Activated CD8-positive, alpha-beta T cell treated with anti-CD3 and anti-CD28 coated beads for 36 hours (primary cell): ENCODE measurements at regions of chr13 and their contacts with region 1.

Region 1: GRCh38 chr13:41668130-41668757 is 210.9 kb downstream of the RGCC start:
- DNase-seq: peak; percentile 45
- ATAC-seq: peak; percentile 90
- H3K4me3 Mint-ChIP-seq: no peak overlapping the region
- H3K27ac Mint-ChIP-seq: no peak overlapping the region
- H3K4me1 Mint-ChIP-seq: no peaks in the 10 kb centered on the region
- H3K27me3 Mint-ChIP-seq: no peaks in the 10 kb centered on the region
- CTCF ChIP-seq: peak; percentile 73

Region 2: DNA sequence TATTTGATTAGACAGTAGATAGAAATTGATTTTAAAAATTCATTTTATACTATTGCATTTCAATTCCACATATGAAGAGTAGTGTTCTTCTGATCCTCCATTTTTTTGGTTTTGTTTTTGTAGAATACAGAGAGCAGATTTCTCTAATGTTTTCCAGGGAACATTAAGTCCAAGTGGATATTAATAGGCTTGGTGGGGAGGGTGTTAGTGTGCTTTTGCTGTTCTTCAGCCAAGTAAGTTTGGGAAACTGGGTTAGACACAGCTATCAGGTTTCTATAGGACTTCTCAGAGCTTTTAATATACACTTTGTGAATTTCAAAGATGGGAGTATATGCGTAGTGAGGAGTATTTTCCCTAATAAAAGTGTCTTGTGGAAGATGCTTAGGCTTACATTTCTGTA is 335.4 kb before region 1 on chr13:
- CTCF ChIA-PET with region 1: no interaction called
- POLR2A ChIA-PET with region 1: no interaction called
- intact Hi-C with region 1: no loop called
- DNase-seq: no peak
- ATAC-seq: no peak
- H3K4me3 Mint-ChIP-seq: no peak overlapping the region
- H3K27ac Mint-ChIP-seq: peak overlapping the region; percentile 13
- H3K4me1 Mint-ChIP-seq: peaks cover 55% of the 10 kb centered on the region
- H3K27me3 Mint-ChIP-seq: no peaks in the 10 kb centered on the region
- CTCF ChIP-seq: no peak

Region 3: DNA sequence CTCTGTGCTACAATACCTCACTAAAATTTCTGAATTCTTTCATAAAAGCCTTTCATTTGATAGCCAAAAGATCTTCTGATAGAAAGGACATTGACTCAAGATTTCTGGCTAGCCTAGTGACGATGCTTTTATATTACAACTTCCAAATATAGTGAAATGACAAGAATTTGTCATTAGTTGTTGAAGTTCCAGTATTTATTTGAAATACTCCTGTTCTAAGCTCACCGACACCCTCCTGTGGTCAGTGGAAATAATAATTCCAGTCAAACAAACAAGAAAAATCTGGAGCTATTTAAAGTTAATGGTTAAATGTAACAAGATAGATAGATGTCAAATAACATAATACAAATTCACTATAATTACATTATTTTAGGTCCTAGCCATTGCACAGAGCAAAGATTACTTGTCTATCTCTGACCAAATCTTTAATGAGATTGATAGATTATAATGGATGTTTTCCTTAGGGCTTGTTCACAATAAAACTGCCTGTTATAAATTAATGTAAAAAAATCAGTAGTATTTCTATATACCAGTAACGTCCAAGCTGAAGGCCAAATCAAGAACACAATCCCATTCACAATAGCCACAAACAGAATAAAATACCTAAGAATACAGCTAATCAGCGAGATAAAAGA is 15.4 kb before region 1 on chr13:
- CTCF ChIA-PET with region 1: interaction called, 21 read pairs
- POLR2A ChIA-PET with region 1: no interaction called
- intact Hi-C with region 1: no loop called
- DNase-seq: peak; percentile 55
- ATAC-seq: no peak
- H3K4me3 Mint-ChIP-seq: no peak overlapping the region
- H3K27ac Mint-ChIP-seq: no peak overlapping the region
- H3K4me1 Mint-ChIP-seq: peaks cover 15% of the 10 kb centered on the region
- H3K27me3 Mint-ChIP-seq: no peaks in the 10 kb centered on the region
- CTCF ChIP-seq: peak; percentile 60

Region 4: GRCh38 chr13:41658056-41658661 is 10.1 kb before region 1 on chr13:
- CTCF ChIA-PET with region 1: interaction called, 21 read pairs
- POLR2A ChIA-PET with region 1: no interaction called
- intact Hi-C with region 1: no loop called
- DNase-seq: no peak
- ATAC-seq: no peak
- H3K4me3 Mint-ChIP-seq: no peak overlapping the region
- H3K27ac Mint-ChIP-seq: no peak overlapping the region
- H3K4me1 Mint-ChIP-seq: peaks cover 15% of the 10 kb centered on the region
- H3K27me3 Mint-ChIP-seq: no peaks in the 10 kb centered on the region
- CTCF ChIP-seq: no peak

Region 5: DNA sequence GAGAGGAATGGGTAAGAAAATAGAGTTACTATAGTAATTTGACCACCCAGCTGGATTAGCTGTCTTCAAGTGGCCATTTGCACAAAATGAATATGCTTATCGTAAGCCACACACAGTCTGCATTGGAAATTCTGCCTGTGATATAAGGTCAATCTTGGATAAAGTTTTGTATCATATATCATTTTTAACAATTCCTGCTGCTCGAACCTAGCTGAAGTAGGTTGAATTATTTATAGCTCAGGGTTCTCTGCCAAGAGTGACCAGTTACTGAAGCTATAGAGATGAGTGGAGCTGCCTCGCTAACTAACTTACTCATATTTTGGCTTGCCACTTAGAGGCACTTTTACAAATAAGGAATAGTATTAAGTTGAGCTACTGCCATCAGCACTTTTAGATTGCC is 10.0 kb after region 1 on chr13:
- CTCF ChIA-PET with region 1: interaction called, 22 read pairs
- POLR2A ChIA-PET with region 1: no interaction called
- intact Hi-C with region 1: no loop called
- DNase-seq: no peak
- ATAC-seq: no peak
- H3K4me3 Mint-ChIP-seq: no peak overlapping the region
- H3K27ac Mint-ChIP-seq: no peak overlapping the region
- H3K4me1 Mint-ChIP-seq: peaks cover 14% of the 10 kb centered on the region
- H3K27me3 Mint-ChIP-seq: no peaks in the 10 kb centered on the region
- CTCF ChIP-seq: no peak

Region 6: DNA sequence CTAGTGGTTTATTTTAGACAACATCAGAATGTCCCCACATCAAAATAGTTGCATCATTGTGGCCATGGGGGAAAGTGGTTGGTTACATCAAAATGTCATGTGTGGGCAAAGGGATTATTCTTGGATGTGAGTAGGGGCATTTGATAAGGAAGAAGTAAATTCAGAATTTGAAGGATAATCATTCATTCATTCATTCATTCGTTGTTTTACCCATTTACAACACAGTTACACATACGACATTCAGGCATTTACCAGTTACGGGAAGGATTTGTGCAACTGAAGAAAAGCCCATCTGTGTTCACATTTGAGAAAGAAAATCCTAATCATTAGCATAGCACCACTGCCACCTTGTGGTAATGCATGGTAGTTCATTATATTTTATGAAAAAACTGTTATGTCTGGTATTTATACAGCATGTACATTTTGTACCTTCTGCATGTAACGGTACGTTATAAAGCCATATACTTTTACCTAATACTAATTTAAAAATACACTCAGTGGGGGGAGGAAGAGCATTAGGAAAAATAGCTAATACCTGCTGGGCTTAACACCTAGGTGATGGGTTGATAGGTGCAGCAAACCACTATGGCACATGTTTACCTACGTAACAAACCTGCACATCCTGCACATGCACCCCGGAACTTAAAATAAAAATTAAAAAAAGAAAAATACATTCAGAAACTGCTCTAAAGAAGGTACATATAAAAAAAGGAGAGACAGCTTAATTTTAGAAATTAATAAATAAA is 442.3 kb after region 1 on chr13:
- CTCF ChIA-PET with region 1: interaction called, 43 read pairs
- POLR2A ChIA-PET with region 1: no interaction called
- intact Hi-C with region 1: loop called (anchors 5 kb)
- DNase-seq: peak; percentile 35
- ATAC-seq: peak; percentile 74
- H3K4me3 Mint-ChIP-seq: no peak overlapping the region
- H3K27ac Mint-ChIP-seq: no peak overlapping the region
- H3K4me1 Mint-ChIP-seq: peaks cover 13% of the 10 kb centered on the region
- H3K27me3 Mint-ChIP-seq: no peaks in the 10 kb centered on the region
- CTCF ChIP-seq: peak; percentile 90